CD4-positive, alpha-beta T cell (primary cell): ENCODE measurements at regions of chr16 and their contacts with region 1.

Region 1: GRCh38 chr16:88569985-88570690 is at the start of gene ZC3H18:
- DNase-seq: peak; percentile 93 to 100 (median 98)
- ATAC-seq: peak; percentile 93
- H3K4me3 ChIP-seq: peak within 1 kb of the TSS; percentile 65
- H3K4me3 Mint-ChIP-seq: peak within 1 kb of the TSS; percentile 88
- H3K27ac ChIP-seq: peak within 1 kb of the TSS; percentile 75 to 78
- H3K27ac Mint-ChIP-seq: peak within 1 kb of the TSS; percentile 87
- H3K4me1 ChIP-seq: peaks cover 31% of the 10 kb centered on the region
- H3K4me1 Mint-ChIP-seq: peaks cover 33% of the 10 kb centered on the region
- H3K27me3 ChIP-seq: no peaks in the 10 kb centered on the region
- H3K27me3 Mint-ChIP-seq: no peaks in the 10 kb centered on the region
- CTCF ChIP-seq: no peak
- total RNA-seq, gene ZC3H18: 92.6 to 93.7 TPM

Region 2: DNA sequence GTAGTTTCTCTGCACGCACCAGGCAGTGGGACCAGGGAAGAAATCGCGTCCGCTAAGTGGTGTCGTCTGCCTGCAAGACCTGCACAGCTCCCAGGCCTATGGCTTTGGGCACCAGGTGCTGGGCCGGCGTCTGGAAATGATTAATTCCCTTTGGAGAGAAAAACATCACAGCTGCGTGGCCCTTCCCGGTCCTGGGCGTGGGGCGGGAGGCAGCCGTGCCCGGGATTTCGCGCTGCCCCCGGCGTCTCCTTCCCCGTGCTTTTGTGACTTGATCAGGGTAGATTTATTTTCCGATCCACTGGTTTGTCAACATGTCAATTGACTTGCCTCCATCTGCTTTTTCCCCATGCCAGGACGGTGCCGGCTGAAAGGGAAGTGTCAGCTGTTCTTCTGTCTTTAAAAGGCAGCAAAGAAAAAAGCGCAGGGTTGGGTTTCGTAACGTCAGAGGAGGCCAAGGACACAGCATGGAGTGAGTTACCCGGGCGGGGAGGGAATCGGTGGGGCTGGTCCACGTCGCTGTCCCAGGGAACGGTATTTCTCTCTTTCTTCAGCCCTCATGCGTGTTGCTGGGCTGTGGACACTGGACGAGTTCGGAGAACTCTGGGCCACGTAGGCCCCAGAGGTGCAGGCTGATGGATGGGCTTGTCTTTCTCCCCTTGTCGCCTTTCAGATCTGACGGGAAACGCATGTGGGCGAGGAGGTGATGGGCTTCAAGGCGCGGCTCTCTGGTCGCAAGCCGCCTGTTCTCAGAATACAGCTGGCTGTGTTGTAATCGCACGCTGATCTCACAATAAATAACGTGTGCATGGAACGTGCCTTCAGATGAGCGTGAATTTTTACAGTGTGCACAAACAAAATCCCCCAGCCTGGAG is 375.5 kb before region 1 on chr16:
- CTCF ChIA-PET with region 1: no interaction called
- POLR2A ChIA-PET with region 1: no interaction called
- intact Hi-C with region 1: loop called in 1 of 2 experiments (anchors 10 kb)
- DNase-seq: peak in 1 of 14 experiments; percentile 3
- ATAC-seq: no peak
- H3K4me3 ChIP-seq: no peak overlapping the region
- H3K4me3 Mint-ChIP-seq: no peak overlapping the region
- H3K27ac ChIP-seq: no peak overlapping the region
- H3K27ac Mint-ChIP-seq: no peak overlapping the region
- H3K4me1 ChIP-seq: no peaks in the 10 kb centered on the region
- H3K4me1 Mint-ChIP-seq: no peaks in the 10 kb centered on the region
- H3K27me3 ChIP-seq: no peaks in the 10 kb centered on the region
- H3K27me3 Mint-ChIP-seq: no peaks in the 10 kb centered on the region
- CTCF ChIP-seq: no peak

Region 3: DNA sequence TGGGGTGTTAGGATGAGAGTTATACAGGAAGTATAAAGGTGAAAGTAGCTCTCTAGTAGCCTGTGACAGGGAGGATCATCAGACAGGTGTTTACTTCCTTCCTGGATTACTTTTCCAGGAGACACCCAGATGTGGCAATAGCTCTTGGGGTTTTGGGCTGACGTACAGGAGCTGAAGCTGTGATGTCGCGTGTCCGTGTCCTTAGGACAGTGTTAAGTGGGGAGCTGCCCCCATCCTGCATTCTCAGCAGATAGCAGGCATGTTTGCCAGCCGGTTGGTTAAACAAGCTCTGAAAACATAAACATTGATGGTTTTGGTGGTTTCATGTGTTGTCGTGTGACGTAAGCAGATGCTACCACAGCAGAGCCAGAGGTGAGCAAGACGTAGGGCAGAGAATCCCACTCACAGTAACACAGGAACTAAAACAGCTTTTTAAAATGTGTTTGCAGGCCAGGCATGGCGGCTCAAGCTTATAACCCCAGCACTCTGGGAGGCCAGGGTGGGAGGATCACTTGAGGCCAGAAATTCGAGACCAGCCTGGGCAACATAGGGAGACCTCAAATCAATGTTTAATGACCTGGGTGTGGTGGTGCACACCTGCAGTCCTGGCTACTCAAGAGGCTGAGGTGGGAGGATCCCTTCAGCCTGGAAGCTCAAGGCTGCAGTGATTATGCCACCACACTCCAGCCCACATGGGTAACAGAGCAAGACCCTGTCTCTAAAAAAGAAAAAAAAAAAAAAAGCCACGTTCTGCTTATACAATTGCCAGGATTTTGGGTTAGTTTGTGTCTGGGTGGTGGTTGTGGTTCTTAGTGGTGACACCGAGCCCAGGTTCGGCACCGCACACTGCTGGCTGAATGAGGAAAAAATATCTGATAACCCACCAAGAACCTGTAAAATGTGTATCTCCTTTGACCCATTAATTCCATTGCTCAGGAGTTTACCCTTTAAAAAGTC is 50.0 kb after region 1 on chr16:
- CTCF ChIA-PET with region 1: no interaction called
- POLR2A ChIA-PET with region 1: interaction called, 15 read pairs
- intact Hi-C with region 1: no loop called
- DNase-seq: peak in 13 of 14 experiments; percentile 37 to 94 (median 59)
- ATAC-seq: peak; percentile 88
- H3K4me3 ChIP-seq: no peak overlapping the region
- H3K4me3 Mint-ChIP-seq: peak overlapping the region; percentile 61
- H3K27ac ChIP-seq: peak overlapping the region in 1 of 2 donors; percentile 71
- H3K27ac Mint-ChIP-seq: peak overlapping the region; percentile 90
- H3K4me1 ChIP-seq: peaks cover 43% of the 10 kb centered on the region
- H3K4me1 Mint-ChIP-seq: peaks cover 19% of the 10 kb centered on the region
- H3K27me3 ChIP-seq: no peaks in the 10 kb centered on the region
- H3K27me3 Mint-ChIP-seq: no peaks in the 10 kb centered on the region
- CTCF ChIP-seq: no peak

Region 4: GRCh38 chr16:88706288-88706964 is 136.3 kb after region 1 on chr16 and contains the starts of genes CTU2 and RNF166:
- CTCF ChIA-PET with region 1: no interaction called
- POLR2A ChIA-PET with region 1: interaction called, 38 read pairs
- intact Hi-C with region 1: loop called (anchors 1 to 10 kb)
- DNase-seq: peak; percentile 81 to 98 (median 90)
- ATAC-seq: peak; percentile 62
- H3K4me3 ChIP-seq: peak within 1 kb of the TSS; percentile 88
- H3K4me3 Mint-ChIP-seq: peak within 1 kb of the TSS; percentile 99
- H3K27ac ChIP-seq: peak within 1 kb of the TSS; percentile 93 to 96
- H3K27ac Mint-ChIP-seq: peak within 1 kb of the TSS; percentile 100
- H3K4me1 ChIP-seq: peaks cover 56% of the 10 kb centered on the region
- H3K4me1 Mint-ChIP-seq: peaks cover 53% of the 10 kb centered on the region
- H3K27me3 ChIP-seq: no peaks in the 10 kb centered on the region
- H3K27me3 Mint-ChIP-seq: no peaks in the 10 kb centered on the region
- CTCF ChIP-seq: no peak
- total RNA-seq, gene CTU2: 39.3 to 44.0 TPM
- total RNA-seq, gene RNF166: 334 to 355 TPM